ENCODE measurements at regions of chr19 and their contacts with region 1.

Region 1: GRCh38 chr19:18192673-18193387 is at the start of gene MPV17L2:
- DNase-seq: peak; percentile 95
- CTCF ChIP-seq: no peak

Region 2: DNA sequence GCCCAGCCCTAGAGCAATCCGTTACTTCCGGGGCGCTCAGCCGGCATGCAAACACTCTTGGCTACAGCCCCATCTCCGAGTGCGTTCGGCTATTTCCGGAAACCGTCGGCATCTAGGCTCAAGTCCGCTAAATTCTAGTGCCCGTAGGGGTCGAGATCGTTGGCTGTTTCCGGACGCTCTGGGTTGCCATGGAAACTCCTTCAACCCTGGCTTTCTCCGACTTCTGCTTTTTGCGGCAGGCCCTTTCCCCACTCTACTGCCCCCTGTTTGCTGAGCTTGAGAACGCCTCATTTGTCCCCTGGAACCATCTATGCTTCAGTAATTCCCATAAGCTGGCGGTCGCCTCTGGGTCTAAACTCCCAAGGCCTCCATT is 40.4 kb before region 1 on chr19:
- CTCF ChIA-PET with region 1: no interaction called
- POLR2A ChIA-PET with region 1: no interaction called
- DNase-seq: peak; percentile 100
- CTCF ChIP-seq: peak; percentile 55

Region 3: GRCh38 chr19:18179957-18180356 is 12.9 kb before region 1 on chr19:
- CTCF ChIA-PET with region 1: interaction called, 26 read pairs
- POLR2A ChIA-PET with region 1: interaction called, 5 read pairs
- DNase-seq: no peak
- CTCF ChIP-seq: no peak